ENCODE measurements at regions of chr11 and their contacts with region 1.

Region 1: DNA sequence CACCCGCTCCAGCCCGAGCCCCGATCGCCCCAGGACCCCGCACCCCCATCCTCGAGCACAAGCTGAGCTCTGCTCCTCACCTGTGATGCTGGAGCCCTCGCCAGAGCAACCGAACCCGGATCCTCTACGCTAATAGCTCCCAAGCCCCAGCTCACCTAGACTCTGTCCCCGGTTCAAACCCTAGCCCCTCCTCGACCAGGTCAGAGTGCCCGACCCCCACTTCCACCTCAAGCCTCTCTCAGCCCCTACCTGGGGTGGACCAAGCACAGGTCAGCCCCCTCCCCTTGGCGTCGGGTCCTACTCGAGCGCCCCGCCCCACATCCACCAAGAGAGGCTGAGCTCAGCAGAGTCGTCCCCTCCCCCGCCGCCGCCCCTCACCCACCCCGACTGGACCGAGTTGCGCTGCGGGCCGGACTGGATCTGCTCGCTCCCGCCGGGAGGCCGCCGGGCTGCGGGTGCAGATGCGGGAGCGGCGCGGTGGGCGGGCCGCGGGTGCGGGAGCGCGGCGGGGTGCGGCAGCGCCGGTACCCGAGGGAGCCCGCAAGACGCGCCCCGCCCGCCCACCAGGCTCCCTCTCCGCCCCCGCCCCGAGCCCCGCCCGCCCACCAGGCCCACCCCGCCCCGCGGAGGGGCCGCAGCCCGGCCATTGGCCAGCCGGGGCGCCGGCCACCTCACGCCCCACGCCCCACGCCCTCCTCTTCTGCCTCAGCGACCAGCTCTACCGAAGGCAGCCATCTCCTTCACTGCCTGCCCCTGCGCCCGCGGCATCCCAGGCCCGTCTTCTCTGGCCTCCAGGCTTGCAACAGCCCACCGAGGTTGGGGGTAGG is 577 bp upstream of the DKK3 start:
- DNase-seq: peak in 2 of 5 donors; percentile 11 to 49
- H3K4me3 ChIP-seq: no peak overlapping the region
- H3K4me3 Mint-ChIP-seq: peak overlapping the region; percentile 70 to 91 (median 78)
- H3K27ac ChIP-seq: no peak overlapping the region
- H3K27ac Mint-ChIP-seq: peak overlapping the region in 5 of 8 donors; percentile 23 to 95 (median 48)
- H3K4me1 ChIP-seq: peaks cover 9% of the 10 kb centered on the region
- H3K4me1 Mint-ChIP-seq: peaks cover 4 to 32% (median 19%) of the 10 kb centered on the region in 3 donors
- H3K27me3 ChIP-seq: peaks cover 20% of the 10 kb centered on the region
- H3K27me3 Mint-ChIP-seq: peaks cover 39 to 65% of the 10 kb centered on the region in 2 donors

Region 2: DNA sequence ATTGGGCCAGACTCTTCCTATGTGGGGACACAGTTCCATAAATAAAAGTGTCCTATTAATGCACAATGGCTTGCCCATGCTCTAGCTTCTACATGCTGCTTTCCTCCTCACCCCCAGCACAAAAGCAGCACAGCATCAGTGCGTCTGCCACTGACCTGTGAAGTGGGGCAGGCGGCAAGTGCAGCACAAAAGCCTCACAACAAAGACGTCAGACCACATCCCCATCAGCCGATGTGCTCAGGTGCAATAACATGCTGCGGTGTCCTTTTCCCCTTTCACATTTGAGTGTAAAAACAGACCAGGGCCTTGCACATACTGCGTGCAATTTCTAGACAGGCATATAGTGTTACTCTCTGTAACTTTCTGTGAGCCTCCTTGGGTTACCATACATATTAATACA is 13.4 kb before region 1 on chr11:
- CTCF ChIA-PET with region 1: interaction called, 4 read pairs
- POLR2A ChIA-PET with region 1: interaction called, 13 read pairs
- DNase-seq: peak; percentile 32 to 74 (median 37)
- H3K4me3 ChIP-seq: no peak overlapping the region
- H3K4me3 Mint-ChIP-seq: peak overlapping the region in 4 of 7 donors; percentile 7 to 78 (median 57)
- H3K27ac ChIP-seq: no peak overlapping the region
- H3K27ac Mint-ChIP-seq: peak overlapping the region; percentile 91 to 99 (median 94)
- H3K4me1 ChIP-seq: peaks cover 15% of the 10 kb centered on the region
- H3K4me1 Mint-ChIP-seq: peaks cover 29 to 77% (median 35%) of the 10 kb centered on the region in 3 donors
- H3K27me3 ChIP-seq: no peaks in the 10 kb centered on the region
- H3K27me3 Mint-ChIP-seq: peaks cover 3 to 28% of the 10 kb centered on the region in 2 donors